MCF 10A (cell line): ENCODE measurements at regions of chrX and their contacts with region 1.

Region 1: GRCh38 chrX:76439188-76439587 is 11.7 kb downstream of the MAGEE1 start:
- DNase-seq: no peak
- H3K4me3 Mint-ChIP-seq: no peak overlapping the region
- H3K27ac Mint-ChIP-seq: no peak overlapping the region
- H3K4me1 Mint-ChIP-seq: no peaks in the 10 kb centered on the region
- H3K27me3 Mint-ChIP-seq: peaks cover 11% of the 10 kb centered on the region
- CTCF ChIP-seq: no peak

Region 2: DNA sequence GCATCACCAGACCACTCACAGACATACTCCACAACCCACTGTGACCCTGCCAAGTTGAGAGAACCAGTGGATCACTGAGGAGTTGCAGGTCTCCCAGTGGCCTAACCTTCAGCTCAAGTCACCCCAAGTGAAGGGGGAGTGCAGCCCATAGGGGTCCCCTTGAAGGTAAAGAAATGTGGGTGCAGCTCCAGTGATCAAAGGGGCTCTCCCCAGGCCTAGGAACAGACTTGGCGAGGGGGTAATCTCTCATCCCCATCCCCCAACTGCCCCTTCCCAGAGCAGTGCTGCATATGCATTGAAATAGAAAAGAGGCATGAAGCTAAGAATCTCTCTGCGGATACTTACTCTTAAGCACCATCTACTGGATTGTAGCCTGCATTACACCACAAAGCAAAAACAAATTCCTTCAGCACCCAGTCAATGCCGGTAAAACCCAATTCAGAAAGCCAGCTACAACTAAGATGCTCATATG is 15.3 kb after region 1 on chrX:
- CTCF ChIA-PET with region 1: interaction called, 11 read pairs
- POLR2A ChIA-PET with region 1: no interaction called
- intact Hi-C with region 1: no loop called
- DNase-seq: peak; percentile 20
- H3K4me3 Mint-ChIP-seq: no peak overlapping the region
- H3K27ac Mint-ChIP-seq: no peak overlapping the region
- H3K4me1 Mint-ChIP-seq: no peaks in the 10 kb centered on the region
- H3K27me3 Mint-ChIP-seq: peaks cover 29% of the 10 kb centered on the region
- CTCF ChIP-seq: peak; percentile 36